HepG2 (cell line): ENCODE measurements at regions of chr16 and their contacts with region 1.

Region 1: DNA sequence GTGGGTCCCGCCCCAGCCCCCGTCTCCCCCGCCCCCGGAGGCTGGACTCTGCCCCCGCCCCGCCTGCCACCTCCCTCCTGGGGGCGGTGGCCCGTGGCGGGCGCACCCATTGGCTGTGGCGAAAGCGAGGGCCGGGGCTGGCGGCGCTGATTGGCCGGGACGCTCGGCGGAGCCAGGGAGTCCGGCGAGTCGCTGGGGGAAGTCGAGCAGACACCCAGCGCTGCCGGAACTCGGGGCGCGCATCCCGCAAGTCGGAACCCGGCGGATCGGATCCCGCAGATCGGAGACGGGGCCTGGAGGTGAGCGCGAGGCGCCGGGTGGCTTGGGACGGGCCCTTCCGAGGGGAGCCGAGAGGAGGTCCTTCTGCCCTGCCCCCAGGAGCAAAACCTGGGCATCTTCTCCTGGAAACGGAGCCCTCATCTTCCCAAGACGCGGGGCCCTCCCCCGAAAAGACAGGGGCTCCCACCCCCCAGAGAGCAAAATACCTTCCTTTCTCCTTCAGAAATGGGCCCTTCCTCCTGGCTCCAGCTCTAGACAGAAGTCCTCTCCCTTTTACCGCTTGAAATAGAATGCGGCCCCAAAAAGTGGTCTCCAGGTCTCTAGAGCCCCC is at the start of gene ABAT:
- DNase-seq: peak; percentile 91
- ATAC-seq: peak; percentile 93
- H3K4me3 ChIP-seq: peak within 1 kb of the TSS; percentile 81 to 94 (median 89)
- H3K27ac ChIP-seq: peak within 1 kb of the TSS; percentile 39
- H3K4me1 ChIP-seq: peaks cover 59% of the 10 kb centered on the region
- H3K27me3 ChIP-seq: no peaks in the 10 kb centered on the region; a peak in 1 of 5 replicates
- CTCF ChIP-seq: 0 out of 2 replicates have a peak, but pooled peaks have one; percentile 9
- EP300 ChIP-seq: peak; percentile 60 to 64; a peak in 2 of 4 replicates
- POLR2A ChIP-seq: peak; percentile 86 to 88
- RAD21 ChIP-seq: peak; percentile 58; the same call in 1 of the 2 replicates
- total RNA-seq, gene ABAT: 97.3 and 123 TPM in 2 replicates

Region 2: GRCh38 chr16:8660841-8661301 is 13.6 kb before region 1 on chr16:
- CTCF ChIA-PET with region 1: no interaction called
- POLR2A ChIA-PET with region 1: interaction called, 4 read pairs
- in situ Hi-C with region 1: no loop called
- intact Hi-C with region 1: loop called (anchors 1 kb)
- DNase-seq: peak; percentile 71
- ATAC-seq: peak; percentile 88
- H3K4me3 ChIP-seq: peak overlapping the region in 1 of 3 experiments; percentile 17; a peak in 1 of 6 replicates
- H3K27ac ChIP-seq: no peak overlapping the region
- H3K4me1 ChIP-seq: no peaks in the 10 kb centered on the region
- H3K27me3 ChIP-seq: peaks cover 0 to 2% of the 10 kb centered on the region in 2 experiments; a peak in 2 of 5 replicates
- CTCF ChIP-seq: peak; percentile 99
- EP300 ChIP-seq: no peak
- POLR2A ChIP-seq: no peak
- RAD21 ChIP-seq: peak; percentile 99

Region 3: GRCh38 chr16:8740775-8741355 is 66.3 kb after region 1 on chr16:
- CTCF ChIA-PET with region 1: no interaction called
- POLR2A ChIA-PET with region 1: interaction called, 17 read pairs
- in situ Hi-C with region 1: loop called (anchors 5 kb)
- intact Hi-C with region 1: loop called (anchors 1 kb)
- DNase-seq: peak; percentile 100
- ATAC-seq: peak; percentile 99
- H3K4me3 ChIP-seq: peak overlapping the region in 1 of 3 experiments; percentile 0; a peak in 1 of 6 replicates
- H3K27ac ChIP-seq: peak overlapping the region; percentile 48
- H3K4me1 ChIP-seq: peaks cover 34% of the 10 kb centered on the region
- H3K27me3 ChIP-seq: no peaks in the 10 kb centered on the region
- CTCF ChIP-seq: no peak
- EP300 ChIP-seq: peak in 1 of 2 experiments; percentile 86; a peak in 2 of 4 replicates
- POLR2A ChIP-seq: peak in 1 of 2 experiments; percentile 35; a peak in 1 of 4 replicates
- RAD21 ChIP-seq: peak; percentile 64

Region 4: GRCh38 chr16:8868416-8869211 is 194.1 kb after region 1 on chr16 and contains the start of gene CARHSP1:
- CTCF ChIA-PET with region 1: no interaction called
- POLR2A ChIA-PET with region 1: interaction called, 7 read pairs
- in situ Hi-C with region 1: no loop called
- intact Hi-C with region 1: loop called (anchors 5 kb)
- DNase-seq: peak; percentile 93
- ATAC-seq: peak; percentile 63
- H3K4me3 ChIP-seq: peak within 1 kb of the TSS; percentile 82 to 97 (median 87)
- H3K27ac ChIP-seq: peak within 1 kb of the TSS; percentile 95
- H3K4me1 ChIP-seq: peaks cover 76% of the 10 kb centered on the region
- H3K27me3 ChIP-seq: no peaks in the 10 kb centered on the region; a peak in 1 of 5 replicates
- CTCF ChIP-seq: no peak
- EP300 ChIP-seq: peak in 1 of 2 experiments; percentile 4; a peak in 1 of 4 replicates
- POLR2A ChIP-seq: peak in 1 of 2 experiments; percentile 88; a peak in 2 of 4 replicates
- RAD21 ChIP-seq: 0 out of 2 replicates have a peak, but pooled peaks have one; percentile 38
- total RNA-seq, gene CARHSP1: 345 and 349 TPM in 2 replicates